ENCODE measurements at regions of chr1 and their contacts with region 1.

Region 1: DNA sequence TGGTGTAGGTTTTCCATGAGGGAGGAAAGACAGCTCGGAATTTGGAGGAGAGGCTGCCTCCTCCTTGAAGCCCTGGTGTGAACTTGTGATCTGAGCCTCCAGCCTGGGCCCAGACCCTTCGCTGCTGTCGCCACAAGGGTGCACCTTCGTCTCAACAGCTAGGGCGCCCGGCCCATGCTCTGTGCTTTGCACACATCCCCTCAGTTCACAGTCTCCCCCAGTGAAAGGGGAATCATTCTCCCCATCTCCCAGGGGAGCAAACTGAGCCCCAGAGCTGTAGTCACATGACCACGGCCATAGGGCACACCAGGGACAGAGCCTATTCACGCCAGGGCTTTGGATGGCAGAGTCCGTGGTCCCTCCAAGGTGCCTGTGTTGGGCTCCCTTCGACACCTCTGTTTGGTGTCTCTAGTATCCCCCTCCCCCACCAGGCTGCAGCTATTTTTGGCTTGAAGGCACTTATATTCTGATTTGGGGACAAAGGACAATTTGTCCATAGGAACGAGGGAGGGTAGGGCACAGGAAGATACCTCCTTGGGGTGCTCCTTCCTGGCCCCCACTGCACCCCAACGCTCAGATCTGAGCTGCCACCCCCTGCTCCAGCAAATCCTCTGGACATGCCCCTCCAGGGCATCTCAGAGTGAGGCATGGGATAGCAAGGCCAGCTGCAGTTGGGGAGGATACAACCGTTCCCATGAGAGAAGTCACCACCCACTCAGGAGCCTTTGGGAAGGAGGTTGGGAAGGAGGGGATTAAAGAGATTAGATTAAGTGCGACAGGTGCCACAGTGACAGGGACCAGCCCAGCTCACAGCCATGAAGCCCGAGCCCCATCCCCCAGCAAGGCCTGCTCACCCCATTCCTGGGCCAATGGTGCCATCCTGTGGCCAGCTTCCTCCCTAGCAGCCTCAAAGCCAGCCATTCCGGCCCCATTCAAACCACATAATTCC is 15.7 kb downstream of the MATN1 start:
- DNase-seq: peak; percentile 81
- ATAC-seq: peak; percentile 88

Region 2: DNA sequence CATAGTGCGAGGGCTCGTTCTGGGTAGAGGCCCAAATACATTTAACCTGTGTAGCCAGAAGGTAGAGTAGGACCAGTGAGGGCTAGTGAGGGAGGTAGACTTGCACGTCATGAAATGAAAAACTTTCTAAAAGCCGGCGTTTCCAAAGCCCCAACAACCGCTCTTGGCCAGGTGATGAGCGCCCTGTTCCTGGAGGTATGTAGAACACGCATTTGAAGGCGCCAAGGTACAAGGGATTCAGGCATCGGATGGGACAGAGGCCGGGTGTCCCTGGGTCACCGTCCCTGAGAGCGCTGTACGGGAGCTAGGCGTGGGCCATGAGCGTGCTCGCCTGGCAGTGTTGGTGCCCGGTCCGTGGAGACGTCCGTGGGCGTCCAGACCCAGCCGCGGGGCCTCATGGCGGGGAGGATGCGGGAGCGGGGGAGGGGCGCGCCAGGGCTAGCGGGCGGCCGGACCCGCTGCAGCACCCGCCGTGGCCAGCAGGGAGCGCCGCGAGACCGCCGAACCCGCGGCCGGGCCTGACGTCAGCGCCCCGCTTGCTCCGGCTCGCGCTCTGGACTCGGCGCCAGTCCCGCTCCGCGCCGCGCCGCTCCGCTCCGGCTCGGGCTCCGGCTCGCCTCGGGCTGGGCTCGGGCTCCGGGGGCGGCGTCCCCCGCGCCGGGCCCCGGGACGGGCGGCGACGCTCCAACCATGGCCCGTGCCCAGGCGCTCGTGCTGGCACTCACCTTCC is 1471.6 kb before region 1 on chr1 and contains the start of gene PTPRU:
- intact Hi-C with region 1: loop called (anchors 5 kb)
- DNase-seq: peak; percentile 89
- ATAC-seq: peak; percentile 84
- total RNA-seq, gene PTPRU: 22.1 TPM

Region 3: GRCh38 chr1:29513357-29513756 is 1194.3 kb before region 1 on chr1:
- intact Hi-C with region 1: loop called (anchors 10 kb)
- DNase-seq: no peak
- ATAC-seq: peak; percentile 88

Region 4: GRCh38 chr1:30111431-30111830 is 596.3 kb before region 1 on chr1:
- intact Hi-C with region 1: loop called (anchors 10 kb)
- DNase-seq: peak; percentile 51
- ATAC-seq: peak; percentile 74

Region 5: GRCh38 chr1:30353637-30354036 is 354.0 kb before region 1 on chr1:
- intact Hi-C with region 1: loop called (anchors 10 kb)
- DNase-seq: no peak
- ATAC-seq: peak; percentile 61

Region 6: DNA sequence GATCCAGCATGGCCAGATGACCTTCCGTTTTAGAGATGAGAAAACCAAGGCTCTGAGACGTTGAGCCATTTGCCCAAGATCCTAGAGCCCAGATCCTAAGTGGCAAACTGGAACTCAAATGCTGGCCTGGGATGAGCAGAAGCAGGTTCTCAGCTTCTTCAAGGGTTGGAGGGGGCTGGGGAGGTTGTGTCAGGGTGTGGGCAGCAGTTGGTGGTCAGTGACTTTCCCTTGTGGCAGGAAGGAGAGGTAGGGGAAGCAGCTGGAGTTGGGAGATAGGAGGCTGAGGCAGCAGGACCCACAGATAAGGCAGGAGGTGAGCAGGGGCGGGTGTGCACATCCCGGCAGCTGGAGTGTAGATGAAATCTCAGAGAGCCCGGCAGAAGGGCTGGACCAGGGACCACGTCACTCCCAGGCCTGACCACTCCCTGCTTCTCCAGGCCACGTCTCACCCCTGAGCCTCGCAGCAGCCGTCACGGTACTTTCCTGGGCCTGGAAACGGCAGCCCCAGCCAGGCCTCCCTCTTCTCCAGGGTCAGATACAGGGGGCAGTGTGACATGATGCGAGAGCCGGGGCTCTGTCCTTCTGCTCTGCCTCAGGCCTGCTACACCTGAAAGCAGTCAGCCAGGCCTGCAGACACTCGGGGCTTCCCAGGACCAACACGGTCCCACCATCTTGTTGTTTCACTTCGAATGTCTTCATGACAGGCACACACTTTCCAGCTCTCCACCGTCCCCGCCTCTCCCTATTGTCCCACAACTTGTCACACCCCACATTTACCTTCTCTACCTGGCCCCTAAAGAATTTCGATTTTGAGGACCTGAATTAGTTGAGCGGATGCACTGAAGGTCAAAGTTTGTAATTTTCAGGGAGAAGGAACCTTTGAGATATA is 61.4 kb after region 1 on chr1:
- intact Hi-C with region 1: no loop called
- DNase-seq: peak; percentile 34
- ATAC-seq: no peak

Measured in Right ventricle myocardium superior (tissue), 1 donor.